Breast epithelium (tissue), 4 donors: ENCODE measurements at regions of chr6 and their contacts with region 1.

Region 1: DNA sequence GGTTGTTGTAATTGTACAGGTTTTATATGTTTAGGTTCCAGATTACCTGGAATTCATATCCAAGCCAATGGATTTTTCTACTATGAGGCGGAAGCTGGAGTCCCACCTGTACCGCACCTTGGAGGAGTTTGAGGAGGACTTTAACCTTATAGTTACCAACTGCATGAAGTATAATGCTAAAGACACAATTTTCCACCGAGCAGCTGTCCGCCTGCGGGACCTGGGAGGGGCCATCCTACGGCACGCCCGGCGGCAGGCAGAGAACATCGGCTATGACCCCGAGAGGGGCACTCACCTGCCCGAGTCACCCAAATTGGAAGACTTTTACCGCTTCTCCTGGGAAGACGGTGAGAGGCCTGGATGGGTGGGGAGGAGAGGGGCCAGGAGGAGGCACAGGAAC is 13.6 kb downstream of the BRPF3 start:
- DNase-seq: no peak
- H3K4me3 ChIP-seq: no peak overlapping the region
- H3K27ac ChIP-seq: no peak overlapping the region
- H3K4me1 ChIP-seq: no peaks in the 10 kb centered on the region
- H3K27me3 ChIP-seq: no peaks in the 10 kb centered on the region
- CTCF ChIP-seq: no peak
- POLR2A ChIP-seq: no peak

Region 2: GRCh38 chr6:35280903-35281302 is 929.3 kb before region 1 on chr6:
- intact Hi-C with region 1: loop called (anchors 5 kb)
- DNase-seq: no peak
- H3K4me3 ChIP-seq: no peak overlapping the region
- H3K27ac ChIP-seq: no peak overlapping the region
- H3K4me1 ChIP-seq: no peaks in the 10 kb centered on the region
- H3K27me3 ChIP-seq: no peaks in the 10 kb centered on the region
- CTCF ChIP-seq: no peak
- POLR2A ChIP-seq: no peak

Region 3: GRCh38 chr6:36131511-36132245 is 78.5 kb before region 1 on chr6:
- intact Hi-C with region 1: no loop called
- DNase-seq: no peak
- H3K4me3 ChIP-seq: peak overlapping the region; percentile 37 to 81 (median 59)
- H3K27ac ChIP-seq: peak overlapping the region; percentile 89 to 95
- H3K4me1 ChIP-seq: peaks cover 3% of the 10 kb centered on the region in 2 donors
- H3K27me3 ChIP-seq: no peaks in the 10 kb centered on the region
- CTCF ChIP-seq: no peak
- POLR2A ChIP-seq: no peak